ENCODE measurements at regions of chr4 and their contacts with region 1.

Region 1: DNA sequence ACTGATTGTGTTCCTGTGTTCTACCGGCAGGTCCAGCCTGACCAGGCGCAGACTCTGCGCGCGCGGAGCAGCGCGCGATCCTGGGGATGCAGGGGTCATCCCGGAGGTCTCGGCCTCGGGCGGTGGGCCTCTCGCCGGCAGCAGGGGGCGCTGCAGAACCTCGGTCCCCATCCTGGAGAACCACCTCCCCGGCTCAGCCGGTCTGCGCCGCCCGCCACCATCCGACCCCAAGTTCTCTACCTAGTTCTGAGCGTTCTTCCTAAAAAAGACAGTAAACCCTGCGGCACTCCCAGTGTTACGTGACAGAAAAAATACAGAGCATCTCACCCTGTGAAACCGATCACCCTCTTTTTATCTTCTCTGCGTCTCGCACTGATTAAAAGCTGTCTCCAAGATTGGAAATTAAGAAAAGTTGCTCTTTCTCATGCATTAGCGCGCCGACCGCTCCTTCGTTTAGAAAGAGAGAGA is 1.6 kb downstream of the TRPC3 start:
- DNase-seq: peak; percentile 94
- ATAC-seq: peak; percentile 87
- H3K4me3 Mint-ChIP-seq: peak overlapping the region; percentile 77
- H3K27ac Mint-ChIP-seq: no peak overlapping the region
- H3K4me1 Mint-ChIP-seq: peaks cover 4% of the 10 kb centered on the region
- H3K27me3 Mint-ChIP-seq: peaks cover 44% of the 10 kb centered on the region

Region 2: GRCh38 chr4:122003335-122003734 is 53.1 kb after region 1 on chr4:
- CTCF ChIA-PET with region 1: interaction called, 6 read pairs
- POLR2A ChIA-PET with region 1: no interaction called
- intact Hi-C with region 1: loop called (anchors 1 to 5 kb)
- DNase-seq: peak; percentile 41
- ATAC-seq: peak; percentile 73
- H3K4me3 Mint-ChIP-seq: no peak overlapping the region
- H3K27ac Mint-ChIP-seq: no peak overlapping the region
- H3K4me1 Mint-ChIP-seq: no peaks in the 10 kb centered on the region
- H3K27me3 Mint-ChIP-seq: peaks cover 11% of the 10 kb centered on the region

Region 3: GRCh38 chr4:122224348-122224747 is 274.1 kb after region 1 on chr4:
- CTCF ChIA-PET with region 1: interaction called, 5 read pairs
- POLR2A ChIA-PET with region 1: no interaction called
- intact Hi-C with region 1: loop called (anchors 1 to 5 kb)
- DNase-seq: peak; percentile 43
- ATAC-seq: no peak
- H3K4me3 Mint-ChIP-seq: no peak overlapping the region
- H3K27ac Mint-ChIP-seq: no peak overlapping the region
- H3K4me1 Mint-ChIP-seq: peaks cover 6% of the 10 kb centered on the region
- H3K27me3 Mint-ChIP-seq: no peaks in the 10 kb centered on the region